Dorsolateral prefrontal cortex (tissue), 120 donors: ENCODE measurements at regions of chr19 and their contacts with region 1.

Region 1: GRCh38 chr19:46529622-46530462 is 34.2 kb upstream of the PNMA8B start:
- DNase-seq: peak; percentile 51 to 85 (median 73)
- H3K4me3 ChIP-seq: peak overlapping the region in 38 of 59 donors; percentile 0 to 52 (median 26)
- H3K27ac ChIP-seq: peak overlapping the region in 19 of 59 donors; percentile 1 to 71 (median 29)
- H3K27me3 ChIP-seq: no peaks in the 10 kb centered on the region
- CTCF ChIP-seq: peak; percentile 90 to 99 (median 96)

Region 2: DNA sequence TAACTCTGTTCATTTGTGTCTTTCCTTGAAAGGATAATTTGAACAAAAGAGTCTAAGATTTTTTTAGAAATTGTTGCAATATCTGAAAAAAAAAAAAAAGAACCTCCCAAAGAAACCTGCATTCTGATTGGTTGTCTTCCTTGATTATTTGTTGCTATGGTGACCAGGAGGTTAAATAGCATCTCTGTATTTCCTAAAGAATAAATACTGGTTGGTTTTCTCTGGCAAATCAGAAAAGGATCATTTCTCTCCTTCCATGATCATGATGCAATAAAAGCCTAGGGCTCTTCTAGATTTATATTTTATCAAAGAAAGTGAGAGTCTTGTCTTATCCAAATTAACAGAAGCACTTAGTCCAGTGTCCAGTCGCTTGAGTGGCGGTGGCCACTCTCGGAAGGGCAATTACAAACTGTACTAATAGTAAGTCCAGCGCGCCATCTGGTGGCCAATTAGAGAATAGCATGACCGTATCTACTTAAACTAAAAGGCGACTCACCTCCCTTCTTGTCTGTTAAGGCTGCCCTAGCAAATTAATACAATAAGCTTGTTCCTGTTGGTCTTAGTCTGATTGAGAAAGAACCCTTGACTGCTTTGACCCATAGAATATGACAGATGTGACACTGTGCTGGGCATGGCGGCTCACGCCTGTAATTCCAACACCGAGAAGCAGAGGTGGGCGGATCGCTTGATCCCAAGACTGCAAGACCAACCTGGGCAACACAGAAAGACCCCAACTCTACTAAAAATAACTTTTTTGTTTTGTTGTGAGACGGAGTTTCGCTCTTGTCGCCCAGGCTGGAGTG is 12.8 kb after region 1 on chr19:
- intact Hi-C with region 1: loop called in 1 of 2 experiments (anchors 2 kb)
- DNase-seq: peak; percentile 74 to 100 (median 92)
- H3K4me3 ChIP-seq: peak overlapping the region in 27 of 59 donors; percentile 0 to 43 (median 27)
- H3K27ac ChIP-seq: peak overlapping the region in 29 of 59 donors; percentile 9 to 83 (median 47)
- H3K27me3 ChIP-seq: no peaks in the 10 kb centered on the region
- CTCF ChIP-seq: peak; percentile 86 to 99 (median 95)

Region 3: DNA sequence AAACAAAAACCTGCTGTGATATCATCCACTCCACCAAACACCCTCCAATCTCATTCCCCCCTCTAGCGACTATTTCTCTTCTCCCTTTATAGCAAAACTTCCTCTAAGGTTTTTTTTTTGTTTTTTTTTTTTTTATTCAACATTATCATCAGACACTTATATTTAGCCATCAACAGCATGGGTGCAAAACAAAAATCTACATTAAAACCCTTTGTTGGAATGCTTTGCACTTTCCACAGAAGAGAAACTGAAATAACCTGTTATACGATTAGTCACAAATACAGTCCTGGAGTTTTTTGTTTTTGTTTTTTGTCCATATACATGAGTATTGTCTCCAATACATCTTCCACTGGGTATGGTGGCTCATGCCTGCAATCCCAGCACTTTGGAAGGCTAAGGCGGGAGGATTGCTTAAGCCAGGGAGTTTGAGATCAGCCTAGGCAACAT is 295.7 kb after region 1 on chr19:
- intact Hi-C with region 1: no loop called
- DNase-seq: no peak
- H3K4me3 ChIP-seq: no peak overlapping the region
- H3K27ac ChIP-seq: peak overlapping the region in 1 of 59 donors; percentile 34
- H3K27me3 ChIP-seq: no peaks in the 10 kb centered on the region
- CTCF ChIP-seq: peak in 1 of 56 donors; percentile 13

Region 4: GRCh38 chr19:46850228-46851203 is 320.7 kb after region 1 on chr19 and contains the start of gene AP2S1:
- intact Hi-C with region 1: loop called in 1 of 2 experiments (anchors 5 kb)
- DNase-seq: peak; percentile 93 to 99 (median 98)
- H3K4me3 ChIP-seq: peak within 1 kb of the TSS; percentile 58 to 97 (median 90)
- H3K27ac ChIP-seq: peak within 1 kb of the TSS in 57 of 59 donors; percentile 5 to 92 (median 78)
- H3K27me3 ChIP-seq: no peaks in the 10 kb centered on the region
- CTCF ChIP-seq: peak in 38 of 56 donors; percentile 7 to 62 (median 36)
- total RNA-seq, gene AP2S1: 73.1 to 190 (median 146) TPM